ENCODE measurements at regions of chr20 and their contacts with region 1.

Region 1: DNA sequence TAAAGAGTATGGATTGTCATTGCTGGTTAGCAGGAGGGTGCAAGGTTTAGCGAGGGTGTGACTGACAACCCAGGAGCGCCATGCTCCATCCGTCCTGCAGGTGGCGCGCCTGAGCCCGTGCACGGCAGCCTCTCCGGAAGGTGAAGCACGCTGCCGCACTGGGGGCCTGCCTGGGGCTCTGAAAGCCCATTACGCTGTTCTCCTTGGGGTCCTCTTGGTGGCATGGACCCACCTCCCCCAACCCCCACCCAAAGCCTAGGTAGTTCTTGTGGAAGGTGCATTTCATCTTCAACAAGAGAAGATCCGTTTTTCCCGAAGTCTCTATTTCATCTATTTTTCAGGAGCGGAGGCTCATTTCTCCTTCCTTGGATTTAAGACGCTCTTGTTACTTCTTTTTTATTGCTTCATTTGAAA is 197.4 kb upstream of the KCNG1 start:
- DNase-seq: no peak
- H3K4me3 ChIP-seq: no peak overlapping the region
- H3K27ac ChIP-seq: no peak overlapping the region
- H3K4me1 ChIP-seq: peaks cover 0 to 6% (median 0%) of the 10 kb centered on the region in 4 donors
- H3K27me3 ChIP-seq: peaks cover 0 to 36% (median 23%) of the 10 kb centered on the region in 3 donors
- CTCF ChIP-seq: peak in 3 of 4 experiments; percentile 33 to 80 (median 42)
- EP300 ChIP-seq: no peak
- POLR2A ChIP-seq: no peak

Region 2: GRCh38 chr20:51169813-51170212 is 50.5 kb before region 1 on chr20:
- intact Hi-C with region 1: loop called (anchors 10 kb)
- DNase-seq: no peak
- H3K4me3 ChIP-seq: no peak overlapping the region
- H3K27ac ChIP-seq: no peak overlapping the region
- H3K4me1 ChIP-seq: no peaks in the 10 kb centered on the region
- H3K27me3 ChIP-seq: peaks cover 0 to 8% (median 0%) of the 10 kb centered on the region in 3 donors
- CTCF ChIP-seq: no peak
- EP300 ChIP-seq: no peak
- POLR2A ChIP-seq: no peak